IMR-90 (cell line): ENCODE measurements at regions of chr12 and their contacts with region 1.

Region 1: GRCh38 chr12:42652048-42652447 is 62.5 kb upstream of the PRICKLE1 start:
- DNase-seq: no peak
- ATAC-seq: no peak
- H3K4me3 ChIP-seq: no peak overlapping the region
- H3K27ac ChIP-seq: no peak overlapping the region
- H3K4me1 ChIP-seq: no peaks in the 10 kb centered on the region
- H3K27me3 ChIP-seq: peaks cover 7% of the 10 kb centered on the region; the same call in 1 of the 2 replicates
- CTCF ChIP-seq: no peak
- POLR2A ChIP-seq: no peak
- RAD21 ChIP-seq: no peak

Region 2: GRCh38 chr12:42609605-42610004 is 42.4 kb before region 1 on chr12:
- CTCF ChIA-PET with region 1: no interaction called
- POLR2A ChIA-PET with region 1: no interaction called
- dilution Hi-C with region 1: no loop called
- in situ Hi-C with region 1: no loop called
- intact Hi-C with region 1: loop called (anchors 5 kb)
- DNase-seq: peak; percentile 49
- ATAC-seq: no peak
- H3K4me3 ChIP-seq: no peak overlapping the region
- H3K27ac ChIP-seq: no peak overlapping the region
- H3K4me1 ChIP-seq: peaks cover 3% of the 10 kb centered on the region; the same call in 1 of the 2 replicates
- H3K27me3 ChIP-seq: peaks cover 3% of the 10 kb centered on the region; the same call in 1 of the 2 replicates
- CTCF ChIP-seq: no peak
- POLR2A ChIP-seq: no peak
- RAD21 ChIP-seq: no peak